ENCODE measurements at regions of chr14 and their contacts with region 1.

Region 1: DNA sequence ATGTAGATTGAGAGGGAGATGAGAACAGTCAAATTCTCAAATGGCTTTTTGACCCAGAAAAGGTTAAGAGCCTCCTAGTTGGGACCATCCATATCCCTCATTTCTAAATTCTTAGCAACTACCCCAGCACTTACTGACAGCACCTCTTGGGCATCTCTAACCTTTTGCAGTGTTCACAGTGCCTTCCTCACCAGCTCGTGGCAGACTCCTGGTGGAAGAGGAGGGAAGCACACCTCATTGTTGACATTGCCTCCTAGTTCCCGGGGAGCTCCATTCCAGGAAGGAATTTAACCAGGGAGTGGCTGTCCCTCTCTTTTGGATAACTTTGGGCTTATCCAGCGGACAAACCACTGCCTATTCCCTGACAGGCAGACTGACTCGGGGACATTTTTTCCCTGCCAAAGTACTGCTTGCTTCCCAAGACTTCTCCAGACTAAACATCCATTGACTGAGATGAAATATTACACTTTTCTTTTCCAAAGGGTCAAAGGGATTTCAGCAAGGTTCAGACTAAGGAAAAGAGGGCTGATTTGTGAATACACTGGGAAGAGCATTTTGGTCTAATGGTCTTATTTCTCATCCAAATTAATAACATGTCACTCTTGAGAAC is 9.0 kb upstream of the OR6J1 start:
- DNase-seq: peak; percentile 17 to 54 (median 42)
- ATAC-seq: peak; percentile 87
- H3K4me3 ChIP-seq: no peak overlapping the region
- H3K4me3 Mint-ChIP-seq: no peak overlapping the region
- H3K27ac ChIP-seq: no peak overlapping the region
- H3K27ac Mint-ChIP-seq: no peak overlapping the region
- H3K4me1 ChIP-seq: no peaks in the 10 kb centered on the region
- H3K4me1 Mint-ChIP-seq: peaks cover 0 to 3% (median 0%) of the 10 kb centered on the region in 7 donors
- H3K27me3 ChIP-seq: no peaks in the 10 kb centered on the region
- H3K27me3 Mint-ChIP-seq: no peaks in the 10 kb centered on the region

Region 2: DNA sequence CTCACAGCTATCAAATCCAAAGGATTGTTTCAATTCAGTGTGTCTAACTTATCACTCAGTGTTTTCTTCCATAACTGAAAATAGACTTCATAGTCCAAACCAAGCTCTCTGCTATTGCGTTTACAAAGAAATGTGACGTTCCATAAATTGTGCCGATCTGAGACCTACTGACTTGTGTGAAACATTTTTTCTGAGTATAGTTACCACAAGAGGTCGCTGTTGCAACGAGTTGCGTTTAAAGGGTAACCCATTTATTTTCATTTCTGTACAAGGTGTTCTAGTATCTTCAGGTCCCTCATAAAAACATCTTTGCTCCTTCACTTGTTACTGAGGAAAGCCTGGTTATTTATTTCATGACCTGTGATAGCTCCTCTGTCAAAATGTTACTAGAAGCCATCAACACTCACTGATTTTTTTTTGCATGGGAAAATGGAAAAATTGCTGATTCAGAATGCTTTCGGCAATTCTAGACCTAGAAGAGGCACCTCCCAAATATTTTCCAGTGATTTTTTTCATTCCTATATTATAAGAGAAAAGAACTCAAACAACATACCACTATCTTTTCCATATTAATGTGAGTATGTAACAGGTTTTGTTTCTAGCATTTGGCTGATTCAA is 918.6 kb before region 1 on chr14:
- CTCF ChIA-PET with region 1: no interaction called
- POLR2A ChIA-PET with region 1: no interaction called
- intact Hi-C with region 1: loop called in 1 of 2 experiments (anchors 10 kb)
- DNase-seq: peak in 7 of 9 donors; percentile 44 to 71 (median 58)
- ATAC-seq: peak; percentile 73
- H3K4me3 ChIP-seq: no peak overlapping the region
- H3K4me3 Mint-ChIP-seq: peak overlapping the region in 9 of 10 donors; percentile 20 to 82 (median 58)
- H3K27ac ChIP-seq: no peak overlapping the region
- H3K27ac Mint-ChIP-seq: peak overlapping the region in 5 of 9 donors; percentile 6 to 85 (median 50)
- H3K4me1 ChIP-seq: no peaks in the 10 kb centered on the region
- H3K4me1 Mint-ChIP-seq: peaks cover 6 to 20% (median 14%) of the 10 kb centered on the region in 7 donors
- H3K27me3 ChIP-seq: no peaks in the 10 kb centered on the region
- H3K27me3 Mint-ChIP-seq: peaks cover 28 to 47% (median 42%) of the 10 kb centered on the region in 5 donors

Region 3: DNA sequence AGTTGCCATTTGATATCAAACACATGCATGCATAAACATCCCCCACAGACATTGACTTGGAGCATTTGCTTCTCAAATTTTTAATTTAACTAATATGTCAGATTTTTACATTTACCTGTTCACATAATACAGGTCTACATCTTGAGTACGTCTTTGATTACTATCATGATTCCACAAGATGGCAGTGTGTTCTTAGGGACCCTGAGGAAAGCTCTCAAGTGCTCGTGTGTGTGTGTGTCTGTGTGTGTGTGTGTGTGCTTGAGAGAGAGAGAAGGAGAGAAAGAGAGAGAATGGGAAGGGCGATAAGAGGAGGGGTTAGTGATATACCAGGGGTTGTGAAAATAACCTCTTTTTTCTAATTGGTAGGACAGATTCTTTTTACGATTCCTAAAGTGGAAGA is 812.4 kb before region 1 on chr14:
- CTCF ChIA-PET with region 1: no interaction called
- POLR2A ChIA-PET with region 1: no interaction called
- intact Hi-C with region 1: loop called in 1 of 2 experiments (anchors 2 kb)
- DNase-seq: peak in 6 of 9 donors; percentile 21 to 50 (median 33)
- ATAC-seq: peak; percentile 76
- H3K4me3 ChIP-seq: no peak overlapping the region
- H3K4me3 Mint-ChIP-seq: peak overlapping the region; percentile 41 to 83 (median 66)
- H3K27ac ChIP-seq: no peak overlapping the region
- H3K27ac Mint-ChIP-seq: peak overlapping the region in 8 of 9 donors; percentile 50 to 90 (median 78)
- H3K4me1 ChIP-seq: no peaks in the 10 kb centered on the region
- H3K4me1 Mint-ChIP-seq: peaks cover 0 to 10% (median 5%) of the 10 kb centered on the region in 7 donors
- H3K27me3 ChIP-seq: no peaks in the 10 kb centered on the region
- H3K27me3 Mint-ChIP-seq: peaks cover 5 to 41% (median 16%) of the 10 kb centered on the region in 5 donors

Region 4: GRCh38 chr14:21868442-21869046 is 784.6 kb before region 1 on chr14:
- CTCF ChIA-PET with region 1: no interaction called
- POLR2A ChIA-PET with region 1: no interaction called
- intact Hi-C with region 1: loop called in 1 of 2 experiments (anchors 10 kb)
- DNase-seq: peak; percentile 33 to 79 (median 70)
- ATAC-seq: peak; percentile 97
- H3K4me3 ChIP-seq: peak overlapping the region; percentile 16
- H3K4me3 Mint-ChIP-seq: peak overlapping the region; percentile 18 to 85 (median 74)
- H3K27ac ChIP-seq: peak overlapping the region; percentile 25
- H3K27ac Mint-ChIP-seq: peak overlapping the region; percentile 8 to 88 (median 59)
- H3K4me1 ChIP-seq: peaks cover 4 to 8% of the 10 kb centered on the region in 2 donors
- H3K4me1 Mint-ChIP-seq: peaks cover 3 to 54% (median 25%) of the 10 kb centered on the region in 7 donors
- H3K27me3 ChIP-seq: peaks cover 0 to 3% of the 10 kb centered on the region in 2 donors
- H3K27me3 Mint-ChIP-seq: peaks cover 0 to 6% (median 0%) of the 10 kb centered on the region in 5 donors

Region 5: GRCh38 chr14:21940887-21941856 is 711.9 kb before region 1 on chr14:
- CTCF ChIA-PET with region 1: no interaction called
- POLR2A ChIA-PET with region 1: no interaction called
- intact Hi-C with region 1: loop called in 1 of 2 experiments (anchors 1 kb)
- DNase-seq: peak in 7 of 9 donors; percentile 42 to 56 (median 51)
- ATAC-seq: peak; percentile 78
- H3K4me3 ChIP-seq: peak overlapping the region; percentile 30
- H3K4me3 Mint-ChIP-seq: peak overlapping the region; percentile 63 to 88 (median 78)
- H3K27ac ChIP-seq: peak overlapping the region; percentile 56
- H3K27ac Mint-ChIP-seq: peak overlapping the region; percentile 79 to 95 (median 90)
- H3K4me1 ChIP-seq: peaks cover 0 to 8% of the 10 kb centered on the region in 2 donors
- H3K4me1 Mint-ChIP-seq: peaks cover 5 to 48% (median 31%) of the 10 kb centered on the region in 7 donors
- H3K27me3 ChIP-seq: no peaks in the 10 kb centered on the region
- H3K27me3 Mint-ChIP-seq: peaks cover 0 to 33% (median 0%) of the 10 kb centered on the region in 5 donors

Region 6: DNA sequence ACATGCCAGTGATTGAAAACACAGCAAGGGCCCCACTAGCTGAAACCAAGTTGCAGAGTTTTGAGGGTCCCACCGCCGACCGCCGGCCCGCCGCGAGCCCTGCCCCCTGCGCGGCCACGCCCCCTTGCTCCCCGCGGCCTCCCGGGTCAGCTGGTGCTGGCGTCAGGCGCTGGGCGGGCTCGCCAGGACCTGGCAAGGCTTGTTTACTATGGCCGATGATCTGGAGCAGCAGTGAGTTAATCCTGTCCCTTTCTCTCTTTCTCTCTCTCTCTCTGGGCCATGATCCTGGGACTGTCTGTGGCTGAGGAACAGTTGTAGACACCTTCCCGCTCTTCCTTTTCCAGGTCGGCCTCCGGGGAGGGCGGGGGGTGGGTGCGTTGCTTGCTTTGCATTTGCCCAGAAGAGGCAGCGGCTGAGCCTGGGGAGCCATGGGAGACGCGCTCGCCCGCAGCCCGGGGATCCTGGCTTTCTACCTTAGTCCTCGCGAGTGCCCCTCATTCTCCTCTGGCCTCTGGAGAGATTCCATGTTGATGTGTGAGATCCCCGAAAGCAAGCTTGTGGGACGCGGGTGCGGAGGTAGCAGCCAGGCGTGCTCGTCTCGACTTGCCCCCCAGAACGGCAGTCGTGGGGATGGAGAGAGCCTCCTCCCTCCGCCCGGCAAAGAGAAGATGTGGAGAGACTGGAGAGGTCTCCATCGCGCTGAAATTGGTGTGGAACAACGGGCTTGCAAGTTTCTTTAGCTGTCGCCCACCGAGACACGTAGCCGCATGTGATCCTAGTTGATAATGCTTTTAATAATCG is 54.8 kb before region 1 on chr14 and contains the start of gene ABHD4:
- CTCF ChIA-PET with region 1: no interaction called
- POLR2A ChIA-PET with region 1: no interaction called
- intact Hi-C with region 1: loop called in 1 of 2 experiments (anchors 1 kb)
- DNase-seq: peak; percentile 31 to 79 (median 43)
- ATAC-seq: peak; percentile 93
- H3K4me3 ChIP-seq: peak within 1 kb of the TSS; percentile 88
- H3K4me3 Mint-ChIP-seq: peak within 1 kb of the TSS; percentile 89 to 99 (median 96)
- H3K27ac ChIP-seq: peak within 1 kb of the TSS; percentile 74
- H3K27ac Mint-ChIP-seq: peak within 1 kb of the TSS; percentile 76 to 96 (median 91)
- H3K4me1 ChIP-seq: peaks cover 10 to 15% of the 10 kb centered on the region in 2 donors
- H3K4me1 Mint-ChIP-seq: peaks cover 23 to 44% (median 35%) of the 10 kb centered on the region in 7 donors
- H3K27me3 ChIP-seq: no peaks in the 10 kb centered on the region
- H3K27me3 Mint-ChIP-seq: peaks cover 0 to 12% (median 0%) of the 10 kb centered on the region in 5 donors
- total RNA-seq, gene ABHD4: 10.5 to 16.3 (median 14.7) TPM

Region 7: DNA sequence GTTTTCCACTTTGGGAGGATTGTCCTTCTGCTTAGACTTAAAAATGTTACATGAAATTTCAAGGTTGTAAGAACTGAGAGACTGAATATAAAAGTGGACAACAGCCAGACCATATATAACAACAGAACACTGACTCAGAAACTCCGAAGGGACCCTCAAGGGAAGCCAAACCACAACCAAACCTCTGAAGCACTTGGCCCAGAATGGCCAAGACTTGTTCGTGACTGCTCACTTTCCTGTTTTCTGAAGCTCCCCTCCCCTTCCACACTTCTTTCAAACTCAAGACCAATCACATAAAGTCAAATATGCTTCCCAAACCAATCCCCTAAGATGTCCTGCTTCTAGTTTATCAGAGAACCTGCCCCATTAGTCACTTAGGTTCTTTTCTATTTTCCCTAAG is 22.6 kb before region 1 on chr14:
- CTCF ChIA-PET with region 1: no interaction called
- POLR2A ChIA-PET with region 1: no interaction called
- intact Hi-C with region 1: no loop called
- DNase-seq: no peak
- ATAC-seq: no peak
- H3K4me3 ChIP-seq: no peak overlapping the region
- H3K4me3 Mint-ChIP-seq: no peak overlapping the region
- H3K27ac ChIP-seq: no peak overlapping the region
- H3K27ac Mint-ChIP-seq: no peak overlapping the region
- H3K4me1 ChIP-seq: no peaks in the 10 kb centered on the region
- H3K4me1 Mint-ChIP-seq: no peaks in the 10 kb centered on the region
- H3K27me3 ChIP-seq: no peaks in the 10 kb centered on the region
- H3K27me3 Mint-ChIP-seq: peaks cover 0 to 29% (median 12%) of the 10 kb centered on the region in 5 donors

Region 8: GRCh38 chr14:22900081-22900799 is 247.1 kb after region 1 on chr14:
- CTCF ChIA-PET with region 1: interaction called, 4 read pairs
- POLR2A ChIA-PET with region 1: no interaction called
- intact Hi-C with region 1: loop called (anchors 5 kb)
- DNase-seq: peak in 7 of 9 donors; percentile 41 to 72 (median 66)
- ATAC-seq: peak; percentile 94
- H3K4me3 ChIP-seq: no peak overlapping the region
- H3K4me3 Mint-ChIP-seq: no peak overlapping the region
- H3K27ac ChIP-seq: peak overlapping the region; percentile 15
- H3K27ac Mint-ChIP-seq: peak overlapping the region in 8 of 9 donors; percentile 0 to 58 (median 35)
- H3K4me1 ChIP-seq: peaks cover 0 to 4% of the 10 kb centered on the region in 2 donors
- H3K4me1 Mint-ChIP-seq: peaks cover 10 to 24% (median 15%) of the 10 kb centered on the region in 7 donors
- H3K27me3 ChIP-seq: no peaks in the 10 kb centered on the region
- H3K27me3 Mint-ChIP-seq: no peaks in the 10 kb centered on the region

Measured in naive thymus-derived CD4-positive, alpha-beta T cell (primary cell).